ENCODE measurements at regions of chr6 and their contacts with region 1.

Region 1: GRCh38 chr6:79078075-79079025 is at the start of gene PHIP:
- DNase-seq: peak; percentile 93
- H3K4me3 Mint-ChIP-seq: peak within 1 kb of the TSS; percentile 91
- H3K27ac Mint-ChIP-seq: peak within 1 kb of the TSS; percentile 97
- H3K4me1 Mint-ChIP-seq: peaks cover 33% of the 10 kb centered on the region
- H3K27me3 Mint-ChIP-seq: peaks cover 4% of the 10 kb centered on the region
- total RNA-seq, gene PHIP: 25.5 to 27.9 TPM

Region 2: GRCh38 chr6:78867370-78868040 is 210.8 kb before region 1 on chr6 and contains the start of gene IRAK1BP1:
- CTCF ChIA-PET with region 1: no interaction called
- POLR2A ChIA-PET with region 1: interaction called, 3 read pairs
- intact Hi-C with region 1: loop called (anchors 1 kb)
- DNase-seq: peak; percentile 90
- H3K4me3 Mint-ChIP-seq: peak within 1 kb of the TSS; percentile 97
- H3K27ac Mint-ChIP-seq: peak within 1 kb of the TSS; percentile 86
- H3K4me1 Mint-ChIP-seq: peaks cover 21% of the 10 kb centered on the region
- H3K27me3 Mint-ChIP-seq: no peaks in the 10 kb centered on the region
- total RNA-seq, gene IRAK1BP1: 2.1 to 2.4 TPM

Region 3: DNA sequence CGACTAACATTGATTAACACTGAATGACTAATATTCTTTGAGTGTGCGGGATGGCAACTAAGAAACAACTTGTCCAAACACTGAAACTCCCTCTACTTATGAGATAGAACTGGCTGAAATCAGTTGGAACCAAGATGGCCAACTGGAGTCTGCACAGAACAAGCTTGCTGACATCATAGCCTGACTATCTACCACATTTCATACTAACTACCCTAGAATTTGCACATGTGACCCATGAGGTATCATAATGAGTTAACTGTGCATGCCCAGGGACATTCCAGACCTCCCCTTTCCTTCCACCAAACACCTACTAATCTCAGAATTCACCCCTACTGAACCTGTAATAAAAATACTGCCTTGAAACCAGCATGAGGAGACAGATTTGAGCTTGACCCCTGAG is 43.5 kb before region 1 on chr6:
- CTCF ChIA-PET with region 1: no interaction called
- POLR2A ChIA-PET with region 1: interaction called, 6 read pairs
- intact Hi-C with region 1: loop called (anchors 1 kb)
- DNase-seq: peak; percentile 35
- H3K4me3 Mint-ChIP-seq: no peak overlapping the region
- H3K27ac Mint-ChIP-seq: peak overlapping the region; percentile 59
- H3K4me1 Mint-ChIP-seq: peaks cover 68% of the 10 kb centered on the region
- H3K27me3 Mint-ChIP-seq: no peaks in the 10 kb centered on the region

Region 4: GRCh38 chr6:79040083-79040482 is 38.3 kb before region 1 on chr6:
- CTCF ChIA-PET with region 1: no interaction called
- POLR2A ChIA-PET with region 1: interaction called, 6 read pairs
- intact Hi-C with region 1: loop called (anchors 1 kb)
- DNase-seq: no peak
- H3K4me3 Mint-ChIP-seq: no peak overlapping the region
- H3K27ac Mint-ChIP-seq: no peak overlapping the region
- H3K4me1 Mint-ChIP-seq: peaks cover 66% of the 10 kb centered on the region
- H3K27me3 Mint-ChIP-seq: no peaks in the 10 kb centered on the region

Region 5: DNA sequence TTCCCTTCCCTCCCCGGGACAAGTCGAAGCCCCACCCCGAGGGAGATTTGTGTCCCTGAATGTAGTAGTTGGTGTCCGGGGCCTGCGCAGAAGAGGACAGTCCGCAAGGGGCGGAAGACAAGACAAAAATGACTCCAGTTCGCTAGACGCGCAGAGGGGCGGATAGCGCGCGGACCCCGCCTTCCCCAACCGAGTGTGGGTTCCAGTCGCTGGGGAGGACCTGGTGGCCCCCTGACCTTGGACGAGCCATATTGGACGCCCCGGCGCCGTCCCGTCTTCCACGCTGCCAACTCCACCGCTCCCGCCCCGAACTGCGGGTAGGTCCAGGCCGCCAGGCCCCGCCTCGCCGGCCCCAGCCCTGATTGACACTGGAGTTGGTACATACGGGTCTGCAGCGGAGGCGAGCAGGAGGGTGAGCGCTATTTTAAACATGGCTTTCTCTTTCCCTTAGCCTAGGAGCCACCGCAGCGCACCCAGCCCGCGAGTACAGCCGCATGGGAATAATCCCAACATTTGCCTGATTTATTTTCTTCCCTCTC is 155.3 kb after region 1 on chr6:
- CTCF ChIA-PET with region 1: no interaction called
- POLR2A ChIA-PET with region 1: interaction called, 3 read pairs
- intact Hi-C with region 1: loop called (anchors 1 kb)
- DNase-seq: peak; percentile 80
- H3K4me3 Mint-ChIP-seq: peak overlapping the region; percentile 88
- H3K27ac Mint-ChIP-seq: peak overlapping the region; percentile 79
- H3K4me1 Mint-ChIP-seq: peaks cover 15% of the 10 kb centered on the region
- H3K27me3 Mint-ChIP-seq: no peaks in the 10 kb centered on the region

Region 6: DNA sequence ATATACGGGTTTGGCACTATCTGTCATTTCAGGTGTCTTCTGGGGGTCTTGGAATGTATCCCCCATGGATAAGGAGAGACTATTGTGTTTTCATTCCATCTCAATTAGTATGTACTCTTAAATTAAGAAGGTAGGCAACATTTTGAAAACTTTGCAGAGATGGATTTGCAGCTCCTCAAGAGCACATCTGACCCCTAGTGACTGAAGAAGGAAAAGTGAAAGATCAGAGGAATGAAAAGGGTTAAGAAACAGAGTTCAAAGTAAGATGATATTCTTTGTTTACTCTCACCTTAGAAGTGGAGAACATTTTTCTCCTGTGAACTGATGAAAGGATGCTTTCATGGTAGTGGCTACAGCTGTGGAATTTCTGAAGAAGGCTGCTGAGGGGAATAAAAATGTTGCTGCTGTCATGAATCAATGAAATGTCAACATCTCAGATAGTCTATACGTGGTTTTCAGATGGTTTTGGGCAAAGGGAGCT is 594.3 kb after region 1 on chr6:
- CTCF ChIA-PET with region 1: no interaction called
- POLR2A ChIA-PET with region 1: no interaction called
- intact Hi-C with region 1: loop called (anchors 5 kb)
- DNase-seq: no peak
- H3K4me3 Mint-ChIP-seq: no peak overlapping the region
- H3K27ac Mint-ChIP-seq: no peak overlapping the region
- H3K4me1 Mint-ChIP-seq: peaks cover 23% of the 10 kb centered on the region
- H3K27me3 Mint-ChIP-seq: no peaks in the 10 kb centered on the region

Region 7: DNA sequence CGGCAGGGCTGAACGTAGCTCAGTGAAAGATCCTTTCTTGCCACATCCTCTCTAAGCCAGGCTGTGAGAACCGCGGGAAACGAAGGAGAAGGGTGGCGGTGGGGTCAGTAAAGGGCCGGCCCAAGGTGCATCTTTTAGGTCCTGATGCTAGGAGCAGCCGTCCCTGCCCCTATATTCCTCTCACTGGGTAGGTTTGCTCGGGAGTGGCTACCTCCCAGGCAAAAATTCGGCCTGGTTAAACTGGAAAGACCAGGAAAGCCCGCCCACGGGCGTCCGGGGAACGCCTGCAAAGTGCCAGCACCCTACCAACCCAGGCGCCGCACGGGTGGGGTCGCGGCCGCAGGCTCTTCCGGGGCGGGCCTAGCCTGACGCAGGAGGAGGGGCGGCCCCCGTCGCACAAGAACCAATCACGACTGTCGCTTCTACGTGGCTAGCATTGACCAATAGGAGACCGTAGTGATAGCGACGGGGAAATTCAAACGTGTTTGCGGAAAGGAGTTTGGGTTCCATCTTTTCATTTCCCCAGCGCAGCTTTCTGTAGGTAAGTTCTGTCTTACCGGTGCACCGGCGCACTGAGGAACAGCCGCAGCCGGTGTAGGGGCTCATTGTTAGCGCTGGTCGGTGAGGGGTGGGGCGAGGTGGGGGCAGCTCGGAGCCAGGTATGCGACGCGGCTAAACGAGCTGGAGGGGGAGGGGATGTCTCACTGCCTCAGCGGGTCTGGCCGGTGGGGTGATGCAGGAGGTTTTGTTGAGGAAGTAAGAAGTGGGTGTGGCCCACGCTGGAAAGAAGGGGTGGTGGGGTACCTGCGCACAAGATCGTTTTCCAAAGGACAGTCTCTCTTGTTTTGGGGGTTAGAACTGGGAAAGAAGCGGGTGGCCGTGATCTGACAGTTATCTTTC is 926.1 kb after region 1 on chr6 and contains the start of gene TTK:
- CTCF ChIA-PET with region 1: no interaction called
- POLR2A ChIA-PET with region 1: no interaction called
- intact Hi-C with region 1: loop called (anchors 5 kb)
- DNase-seq: peak; percentile 94
- H3K4me3 Mint-ChIP-seq: peak within 1 kb of the TSS; percentile 94
- H3K27ac Mint-ChIP-seq: peak within 1 kb of the TSS; percentile 86
- H3K4me1 Mint-ChIP-seq: peaks cover 28% of the 10 kb centered on the region
- H3K27me3 Mint-ChIP-seq: peaks cover 3% of the 10 kb centered on the region
- total RNA-seq, gene TTK: 37.2 to 39.4 TPM